ENCODE measurements at regions of chr13 and their contacts with region 1.

Region 1: DNA sequence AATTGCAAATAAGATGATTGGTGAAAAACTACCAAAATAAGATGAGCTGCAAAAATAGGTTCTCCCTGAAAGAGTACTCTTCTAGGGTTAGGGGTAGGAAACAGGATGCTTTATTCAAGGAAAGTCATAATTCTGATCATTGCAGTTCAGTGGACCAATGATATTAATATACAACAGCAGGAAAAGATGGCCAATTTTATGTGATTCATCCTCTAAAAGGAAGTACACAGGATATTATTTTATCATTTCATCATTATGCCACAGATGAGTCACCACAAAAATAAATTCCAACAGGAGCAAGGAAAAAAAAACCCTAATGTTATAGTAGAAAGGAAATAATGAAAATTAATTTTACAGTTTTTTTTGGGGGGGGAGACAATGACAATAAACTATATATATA is 205.0 kb downstream of the NALCN start:
- DNase-seq: peak; percentile 76
- ATAC-seq: peak; percentile 82
- H3K4me3 ChIP-seq: no peak overlapping the region
- H3K27ac ChIP-seq: peak overlapping the region; percentile 51
- H3K4me1 ChIP-seq: peaks cover 35% of the 10 kb centered on the region
- H3K27me3 ChIP-seq: no peaks in the 10 kb centered on the region
- CTCF ChIP-seq: no peak

Region 2: GRCh38 chr13:101065329-101065728 is 145.9 kb before region 1 on chr13:
- CTCF ChIA-PET with region 1: no interaction called
- POLR2A ChIA-PET with region 1: no interaction called
- intact Hi-C with region 1: no loop called
- DNase-seq: no peak
- ATAC-seq: no peak
- H3K4me3 ChIP-seq: no peak overlapping the region
- H3K27ac ChIP-seq: no peak overlapping the region
- H3K4me1 ChIP-seq: no peaks in the 10 kb centered on the region
- H3K27me3 ChIP-seq: no peaks in the 10 kb centered on the region
- CTCF ChIP-seq: no peak

Region 3: DNA sequence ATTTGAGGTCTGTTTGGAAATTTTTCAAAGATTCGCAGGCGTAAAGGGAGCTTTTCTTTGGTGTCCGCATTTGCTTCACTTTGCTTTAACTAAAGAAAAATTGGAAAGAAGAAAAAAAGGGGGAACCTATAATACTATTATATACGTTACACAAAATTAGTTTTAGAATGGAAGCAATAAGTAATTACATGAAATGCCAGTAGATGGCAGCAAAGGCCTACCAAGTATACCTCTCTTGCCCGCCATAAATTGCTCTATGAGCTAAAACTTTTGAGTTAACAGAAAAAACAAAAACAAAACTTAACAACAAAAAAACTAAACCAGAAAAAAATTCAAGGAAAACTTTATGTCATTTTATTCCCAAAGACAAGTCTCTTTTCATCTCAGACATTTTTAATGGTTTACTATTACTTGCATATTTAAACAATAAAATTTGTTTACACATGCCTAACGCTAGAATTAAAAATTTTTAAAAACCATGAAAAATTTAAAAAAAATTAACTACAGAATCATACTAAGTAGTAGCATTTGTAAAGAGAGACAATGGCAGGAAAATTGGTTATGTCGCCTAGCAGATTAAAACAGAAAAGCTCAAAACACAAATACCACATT is 66.3 kb before region 1 on chr13:
- CTCF ChIA-PET with region 1: no interaction called
- POLR2A ChIA-PET with region 1: no interaction called
- intact Hi-C with region 1: loop called (anchors 5 kb)
- DNase-seq: peak; percentile 74
- ATAC-seq: peak; percentile 68
- H3K4me3 ChIP-seq: no peak overlapping the region
- H3K27ac ChIP-seq: no peak overlapping the region
- H3K4me1 ChIP-seq: peaks cover 22% of the 10 kb centered on the region
- H3K27me3 ChIP-seq: no peaks in the 10 kb centered on the region
- CTCF ChIP-seq: peak; percentile 70

Region 4: GRCh38 chr13:101258071-101258470 is 46.8 kb after region 1 on chr13:
- CTCF ChIA-PET with region 1: no interaction called
- POLR2A ChIA-PET with region 1: interaction called, 3 read pairs
- intact Hi-C with region 1: loop called (anchors 5 kb)
- DNase-seq: peak; percentile 90
- ATAC-seq: peak; percentile 92
- H3K4me3 ChIP-seq: peak overlapping the region; percentile 10; the same call in 1 of the 2 replicates
- H3K27ac ChIP-seq: peak overlapping the region; percentile 83
- H3K4me1 ChIP-seq: peaks cover 23% of the 10 kb centered on the region
- H3K27me3 ChIP-seq: no peaks in the 10 kb centered on the region
- CTCF ChIP-seq: peak; percentile 29; the same call in 1 of the 2 replicates

Region 5: GRCh38 chr13:101309014-101309619 is 97.9 kb after region 1 on chr13:
- CTCF ChIA-PET with region 1: no interaction called
- POLR2A ChIA-PET with region 1: no interaction called
- intact Hi-C with region 1: no loop called
- DNase-seq: peak; percentile 33
- ATAC-seq: peak; percentile 70
- H3K4me3 ChIP-seq: no peak overlapping the region
- H3K27ac ChIP-seq: peak overlapping the region; percentile 52
- H3K4me1 ChIP-seq: peaks cover 21% of the 10 kb centered on the region
- H3K27me3 ChIP-seq: no peaks in the 10 kb centered on the region
- CTCF ChIP-seq: no peak

Region 6: DNA sequence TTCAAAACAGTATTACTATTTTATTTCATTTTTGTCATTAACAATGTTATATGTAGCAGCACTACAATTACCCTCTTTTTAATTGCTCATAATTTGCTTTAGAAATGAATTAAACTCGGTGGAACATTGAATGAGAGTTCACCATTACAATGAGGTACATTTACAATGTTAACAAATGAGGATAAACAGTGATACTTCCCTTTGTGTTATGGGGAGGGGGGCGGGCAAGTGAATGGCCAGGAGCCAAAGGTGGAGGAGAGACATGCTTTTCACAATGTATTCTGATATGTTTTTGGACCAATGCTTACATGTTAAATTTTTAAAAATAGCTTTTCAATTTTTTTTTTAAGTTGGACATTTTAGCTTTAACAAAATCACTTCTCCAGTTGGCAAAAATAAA is 170.8 kb after region 1 on chr13:
- CTCF ChIA-PET with region 1: no interaction called
- POLR2A ChIA-PET with region 1: no interaction called
- intact Hi-C with region 1: no loop called
- DNase-seq: no peak
- ATAC-seq: no peak
- H3K4me3 ChIP-seq: no peak overlapping the region
- H3K27ac ChIP-seq: no peak overlapping the region
- H3K4me1 ChIP-seq: no peaks in the 10 kb centered on the region
- H3K27me3 ChIP-seq: no peaks in the 10 kb centered on the region
- CTCF ChIP-seq: no peak

Measured in PC-3 (cell line).